ENCODE measurements at regions of chr2 and their contacts with region 1.

Region 1: GRCh38 chr2:28610583-28611201 is 114.8 kb downstream of the PLB1 start:
- DNase-seq: peak; percentile 87
- H3K4me3 Mint-ChIP-seq: no peak overlapping the region
- H3K27ac Mint-ChIP-seq: peak overlapping the region; percentile 94
- H3K4me1 Mint-ChIP-seq: peaks cover 20% of the 10 kb centered on the region
- H3K27me3 Mint-ChIP-seq: no peaks in the 10 kb centered on the region
- CTCF ChIP-seq: no peak

Region 2: DNA sequence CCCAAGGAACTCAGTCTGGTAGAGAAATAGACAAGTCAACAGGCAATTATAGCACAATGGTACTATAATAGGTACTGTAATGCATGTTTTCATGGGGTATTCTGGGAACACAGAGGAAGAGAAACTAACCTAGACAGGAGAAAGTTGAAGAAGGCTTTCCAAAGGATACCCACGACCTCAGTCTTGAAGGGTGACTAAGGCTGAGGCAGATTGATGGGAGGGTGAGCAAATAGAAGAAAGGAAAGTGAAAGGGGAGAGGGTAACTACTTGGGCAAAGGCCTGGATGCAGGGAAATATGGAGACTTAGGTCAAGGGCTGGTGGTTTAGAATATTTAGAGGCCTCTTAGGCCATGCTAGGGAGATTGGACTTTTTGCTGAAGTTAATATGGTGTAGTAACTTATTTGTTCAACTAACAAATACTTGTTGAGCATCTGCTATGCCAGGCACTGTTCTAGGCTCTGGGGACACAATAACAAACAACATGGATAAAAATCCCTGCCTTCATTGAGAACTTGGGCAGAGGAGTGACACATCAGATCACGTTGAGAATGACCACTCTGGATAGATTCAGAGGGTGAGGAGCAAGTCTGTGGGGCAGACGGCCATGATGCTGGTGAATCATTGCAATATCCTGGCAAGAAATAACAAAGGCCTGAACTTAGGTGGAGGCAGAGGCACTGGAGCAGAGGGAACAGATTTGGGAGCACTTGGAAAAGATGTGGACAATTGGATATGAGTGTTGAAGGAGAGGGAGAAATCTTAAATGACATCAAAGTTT is 58.5 kb before region 1 on chr2:
- CTCF ChIA-PET with region 1: no interaction called
- intact Hi-C with region 1: no loop called
- DNase-seq: no peak
- H3K4me3 Mint-ChIP-seq: no peak overlapping the region
- H3K27ac Mint-ChIP-seq: no peak overlapping the region
- H3K4me1 Mint-ChIP-seq: peaks cover 11% of the 10 kb centered on the region
- H3K27me3 Mint-ChIP-seq: no peaks in the 10 kb centered on the region
- CTCF ChIP-seq: no peak

Region 3: GRCh38 chr2:28566521-28567041 is 44.1 kb before region 1 on chr2:
- CTCF ChIA-PET with region 1: no interaction called
- intact Hi-C with region 1: loop called (anchors 5 kb)
- DNase-seq: peak; percentile 93
- H3K4me3 Mint-ChIP-seq: peak overlapping the region; percentile 75
- H3K27ac Mint-ChIP-seq: peak overlapping the region; percentile 26
- H3K4me1 Mint-ChIP-seq: no peaks in the 10 kb centered on the region
- H3K27me3 Mint-ChIP-seq: no peaks in the 10 kb centered on the region
- CTCF ChIP-seq: peak; percentile 99

Region 4: GRCh38 chr2:28652217-28652616 is 41.5 kb after region 1 on chr2:
- CTCF ChIA-PET with region 1: no interaction called
- intact Hi-C with region 1: loop called (anchors 2 kb)
- DNase-seq: no peak
- H3K4me3 Mint-ChIP-seq: no peak overlapping the region
- H3K27ac Mint-ChIP-seq: peak overlapping the region; percentile 66
- H3K4me1 Mint-ChIP-seq: peaks cover 78% of the 10 kb centered on the region
- H3K27me3 Mint-ChIP-seq: no peaks in the 10 kb centered on the region
- CTCF ChIP-seq: no peak

Region 5: GRCh38 chr2:28949617-28950305 is 339.1 kb after region 1 on chr2:
- CTCF ChIA-PET with region 1: no interaction called
- intact Hi-C with region 1: no loop called
- DNase-seq: no peak
- H3K4me3 Mint-ChIP-seq: peak overlapping the region; percentile 9
- H3K27ac Mint-ChIP-seq: peak overlapping the region; percentile 46
- H3K4me1 Mint-ChIP-seq: peaks cover 39% of the 10 kb centered on the region
- H3K27me3 Mint-ChIP-seq: no peaks in the 10 kb centered on the region
- CTCF ChIP-seq: no peak